ENCODE measurements at regions of chr2 and their contacts with region 1.

Region 1: GRCh38 chr2:134118279-134119116 is 135.4 kb upstream of the MGAT5 start:
- DNase-seq: peak; percentile 89

Region 2: DNA sequence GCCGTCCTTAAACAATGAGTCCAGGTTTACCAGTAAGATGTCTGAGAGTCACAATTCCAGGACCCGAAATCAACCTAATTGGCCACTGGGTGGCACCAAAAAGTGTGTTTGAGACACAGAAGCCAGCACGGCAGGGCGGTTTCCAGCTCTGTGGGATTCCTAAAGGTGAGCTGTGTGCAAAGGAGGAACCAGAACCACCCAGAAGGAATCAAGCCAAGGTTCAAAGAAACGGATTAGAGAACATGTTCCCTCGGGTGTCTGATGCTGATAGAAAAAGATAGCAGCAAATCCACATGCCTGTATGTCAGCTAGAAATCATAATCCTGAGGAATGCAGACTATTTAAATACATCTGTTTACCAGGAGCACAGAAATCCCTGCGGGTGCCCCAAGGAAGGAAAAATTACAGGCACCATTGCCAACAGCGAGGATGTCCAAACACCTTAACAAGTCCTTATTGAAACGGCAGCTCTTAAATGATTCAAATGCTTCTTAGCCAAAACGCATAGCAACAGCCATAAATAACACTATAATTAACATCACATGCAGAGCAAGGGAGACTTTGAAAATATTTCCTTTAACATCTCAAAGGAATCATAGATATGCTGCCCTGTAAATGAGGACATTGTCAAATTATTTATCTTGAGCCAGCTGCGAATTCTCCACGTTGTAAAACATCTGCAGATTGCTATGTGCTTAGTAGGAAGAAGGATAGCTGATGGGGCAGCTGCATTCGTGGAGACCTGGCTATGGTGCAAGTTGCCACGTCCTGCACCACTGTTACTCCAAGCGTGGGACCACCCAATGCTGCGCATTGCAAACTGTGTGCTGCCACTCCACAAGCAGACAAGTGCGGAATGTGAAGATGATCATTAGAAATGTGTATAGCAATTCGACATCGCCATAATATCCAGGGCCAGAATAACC is 231.5 kb before region 1 on chr2:
- intact Hi-C with region 1: loop called (anchors 2 kb)
- DNase-seq: peak; percentile 83

Region 3: GRCh38 chr2:133900890-133901289 is 217.6 kb before region 1 on chr2:
- intact Hi-C with region 1: no loop called
- DNase-seq: no peak

Region 4: DNA sequence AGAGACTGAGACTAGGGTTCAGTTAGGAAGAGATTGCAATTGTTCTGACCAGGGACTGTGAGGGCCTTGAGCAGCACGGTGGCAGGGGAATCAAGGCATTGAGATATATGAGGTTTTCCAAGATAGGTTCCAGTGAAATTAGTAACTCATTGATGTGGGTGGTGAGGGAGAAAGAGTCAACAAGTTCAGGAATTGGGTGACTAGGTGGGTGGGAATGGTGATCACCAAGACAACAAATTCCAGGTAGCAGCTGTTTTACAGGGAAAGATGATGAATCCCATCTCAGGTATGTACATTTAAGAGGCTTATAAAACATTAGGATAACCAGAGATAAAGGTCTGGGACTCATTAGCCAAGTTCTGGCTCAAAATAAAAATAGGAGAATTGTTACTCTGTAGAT is 116.1 kb before region 1 on chr2:
- intact Hi-C with region 1: no loop called
- DNase-seq: no peak

Region 5: GRCh38 chr2:134154246-134154645 is 35.7 kb after region 1 on chr2:
- intact Hi-C with region 1: no loop called
- DNase-seq: no peak

Region 6: GRCh38 chr2:134173338-134174016 is 55.0 kb after region 1 on chr2:
- intact Hi-C with region 1: loop called (anchors 5 kb)
- DNase-seq: no peak

Region 7: DNA sequence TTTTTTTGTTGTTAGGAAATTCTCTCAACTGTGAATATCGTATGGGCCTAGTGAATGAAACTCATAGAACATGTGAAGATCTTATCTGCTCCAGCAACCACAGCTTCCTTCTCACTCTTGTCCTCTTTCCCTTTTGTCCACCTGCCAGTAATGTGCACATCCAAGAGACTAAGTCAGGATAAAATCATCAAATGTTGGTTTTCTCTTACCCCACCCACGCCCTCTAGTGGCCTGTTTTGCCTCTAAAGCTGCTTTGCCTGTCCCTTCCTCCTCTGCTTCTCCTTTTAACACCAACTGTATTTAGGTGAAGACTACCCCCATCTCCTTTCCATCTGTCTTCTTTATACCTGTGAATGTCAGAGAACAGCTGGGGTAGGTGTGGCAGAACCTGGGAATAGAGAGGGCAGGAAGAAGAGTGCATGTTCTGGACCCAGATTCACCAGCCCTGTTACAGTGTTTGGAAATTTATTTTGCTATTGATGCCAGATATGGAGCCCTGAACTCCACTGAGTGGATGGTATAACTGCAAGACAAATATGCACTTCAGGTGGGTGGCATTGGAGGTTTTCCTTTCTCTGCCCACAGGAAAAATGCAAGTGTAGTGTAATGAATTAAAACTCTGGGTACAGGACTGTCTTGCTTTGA is 127.0 kb after region 1 on chr2:
- intact Hi-C with region 1: loop called (anchors 2 kb)
- DNase-seq: peak; percentile 85

Region 8: DNA sequence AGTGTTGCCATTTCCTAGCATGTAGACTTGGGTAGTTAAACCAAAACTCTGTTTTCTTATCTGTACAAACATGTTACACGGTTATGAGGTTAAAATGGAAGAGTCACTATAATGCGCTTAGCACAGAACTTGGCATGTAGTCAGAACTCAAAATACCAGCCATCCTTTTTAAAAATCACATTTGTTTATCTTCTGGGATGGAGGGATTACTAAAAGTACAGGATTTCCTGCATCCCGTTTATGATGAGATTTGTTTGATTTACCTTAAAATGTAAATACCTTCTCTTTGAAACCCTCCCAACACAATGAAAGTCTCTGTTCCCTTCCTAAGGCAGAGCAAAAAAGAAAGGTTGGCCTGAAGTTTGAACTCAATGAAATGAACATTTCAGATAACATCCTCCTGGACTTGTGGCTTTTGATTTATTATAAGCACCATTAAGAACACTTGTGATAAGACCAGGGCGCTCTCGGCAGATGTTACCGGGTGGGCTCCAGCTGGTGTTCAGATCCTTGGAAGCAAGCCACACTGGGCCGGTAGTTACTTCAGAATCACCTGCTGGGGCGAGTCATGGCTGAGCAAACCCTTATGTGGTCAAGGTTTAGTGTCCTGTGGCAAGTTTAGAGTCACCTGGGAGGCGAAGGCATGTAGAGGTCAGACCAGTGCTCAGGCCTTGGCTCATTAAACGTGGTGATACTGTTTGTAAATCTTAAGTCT is 241.0 kb after region 1 on chr2:
- intact Hi-C with region 1: loop called (anchors 5 kb)
- DNase-seq: no peak

Region 9: DNA sequence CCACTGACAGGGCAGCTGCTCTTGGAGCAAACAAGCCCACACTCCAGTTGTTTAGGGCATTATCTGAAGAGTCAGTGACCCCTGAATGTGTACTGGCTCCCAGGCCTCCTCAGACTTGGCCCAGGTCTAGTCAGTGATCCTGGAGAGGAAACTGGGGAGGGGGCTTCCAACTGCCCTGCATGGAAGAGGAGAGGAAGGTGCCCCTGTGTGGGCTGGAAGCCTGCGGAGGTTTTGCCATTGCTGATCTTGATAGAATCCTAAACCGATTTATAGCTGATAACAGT is 332.8 kb after region 1 on chr2:
- intact Hi-C with region 1: loop called (anchors 2 kb)
- DNase-seq: peak; percentile 61